Activated T-helper 1 cell treated with anti-CD3 and anti-CD28 coated beads, Interleukin-12 subunit alpha, Interleukin-12 subunit beta, Interleukin-2, Interleukin-4 antibody, amounts not matched to agents 30 ng/mL and 10 ng/mL and 1 ng/mL, durations not matched to agents 14 hours and 24 hours and 36 hours (primary cell): ENCODE measurements at regions of chr7 and their contacts with region 1.

Region 1: DNA sequence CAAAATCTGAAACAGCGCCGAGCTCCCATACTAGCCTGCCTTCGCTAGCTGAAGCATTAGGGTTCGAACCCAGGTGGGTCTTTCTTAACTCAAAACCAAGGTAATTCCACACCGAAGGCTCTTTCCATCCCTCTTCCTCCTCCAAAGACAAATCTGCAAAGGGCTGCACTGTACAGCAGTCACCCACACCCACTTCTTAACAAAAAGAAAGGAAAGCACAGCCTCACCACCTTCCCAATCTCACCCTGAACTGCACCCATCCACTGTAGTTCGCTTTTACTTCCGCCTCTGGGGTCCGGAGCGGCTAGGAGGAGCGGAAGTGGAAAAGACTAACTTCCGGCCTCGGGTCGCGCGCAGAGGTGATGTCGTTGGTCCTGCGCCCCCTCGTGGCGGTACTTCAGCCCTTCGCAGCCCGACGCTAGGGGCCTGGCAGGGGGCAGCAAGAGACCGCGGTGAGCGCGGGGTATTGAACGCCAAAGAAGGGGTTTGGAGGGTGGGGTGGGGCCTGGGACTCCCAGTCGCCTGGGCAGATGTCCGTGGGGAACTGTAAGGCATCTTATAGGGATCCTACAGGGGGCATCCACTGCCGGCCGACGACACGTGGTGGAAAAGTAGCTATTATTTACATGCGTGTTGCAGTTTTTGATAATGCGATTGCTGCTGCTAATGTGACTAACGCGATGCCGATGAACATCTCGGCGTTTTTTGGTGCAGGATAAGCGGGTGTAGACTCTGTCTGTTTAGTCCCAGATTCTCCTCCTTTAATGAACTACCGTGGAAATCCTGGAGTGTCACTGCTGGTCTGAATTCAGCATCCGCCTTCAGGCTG is at the start of gene MTERF1:
- DNase-seq: peak; percentile 85
- H3K4me3 Mint-ChIP-seq: peak within 1 kb of the TSS; percentile 99
- H3K27ac Mint-ChIP-seq: peak within 1 kb of the TSS; percentile 98
- H3K4me1 Mint-ChIP-seq: peaks cover 37% of the 10 kb centered on the region
- H3K27me3 Mint-ChIP-seq: peaks cover 2% of the 10 kb centered on the region
- total RNA-seq, gene MTERF1: 19.3 and 20.4 TPM in 2 replicates

Region 2: DNA sequence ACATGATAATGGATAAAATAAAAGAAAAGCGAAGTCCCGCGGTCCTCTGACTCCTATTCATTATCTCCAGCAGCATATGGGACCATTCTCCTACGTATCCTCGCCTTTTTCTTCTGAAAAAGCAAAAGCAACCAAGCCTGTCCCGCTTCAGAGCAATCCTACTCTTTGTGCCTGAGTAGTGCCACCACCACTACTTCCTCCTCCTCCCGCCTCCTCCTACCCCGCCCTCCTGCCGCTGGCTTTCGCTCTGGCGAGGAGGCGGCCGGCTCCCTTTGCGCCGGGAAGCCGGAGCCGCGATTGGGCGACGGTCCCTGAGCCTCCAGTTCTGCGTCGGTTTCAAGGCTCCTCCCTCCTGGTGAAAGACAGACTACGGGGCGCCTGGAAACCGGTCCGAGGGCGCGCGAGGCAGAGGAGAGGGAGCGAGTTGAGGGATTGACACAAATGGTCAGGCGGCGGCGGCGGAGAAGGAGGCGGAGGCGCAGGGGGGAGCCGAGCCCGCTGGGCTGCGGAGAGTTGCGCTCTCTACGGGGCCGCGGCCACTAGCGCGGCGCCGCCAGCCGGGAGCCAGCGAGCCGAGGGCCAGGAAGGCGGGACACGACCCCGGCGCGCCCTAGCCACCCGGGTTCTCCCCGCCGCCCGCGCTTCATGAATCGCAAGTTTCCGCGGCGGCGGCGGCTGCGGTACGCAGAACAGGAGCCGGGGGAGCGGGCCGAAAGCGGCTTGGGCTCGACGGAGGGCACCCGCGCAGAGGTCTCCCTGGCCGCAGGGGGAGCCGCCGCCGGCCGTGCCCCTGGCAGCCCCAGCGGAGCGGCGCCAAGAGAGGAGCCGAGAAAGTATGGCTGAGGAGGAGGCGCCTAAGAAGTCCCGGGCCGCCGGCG is 616.3 kb before region 1 on chr7 and contains the start of gene FZD1:
- intact Hi-C with region 1: loop called (anchors 1 kb)
- DNase-seq: peak; percentile 66
- H3K4me3 Mint-ChIP-seq: peak within 1 kb of the TSS; percentile 88
- H3K27ac Mint-ChIP-seq: peak within 1 kb of the TSS; percentile 74
- H3K4me1 Mint-ChIP-seq: no peaks in the 10 kb centered on the region
- H3K27me3 Mint-ChIP-seq: peaks cover 47% of the 10 kb centered on the region
- total RNA-seq, gene FZD1: 0.70 and 0.86 TPM in 2 replicates

Region 3: DNA sequence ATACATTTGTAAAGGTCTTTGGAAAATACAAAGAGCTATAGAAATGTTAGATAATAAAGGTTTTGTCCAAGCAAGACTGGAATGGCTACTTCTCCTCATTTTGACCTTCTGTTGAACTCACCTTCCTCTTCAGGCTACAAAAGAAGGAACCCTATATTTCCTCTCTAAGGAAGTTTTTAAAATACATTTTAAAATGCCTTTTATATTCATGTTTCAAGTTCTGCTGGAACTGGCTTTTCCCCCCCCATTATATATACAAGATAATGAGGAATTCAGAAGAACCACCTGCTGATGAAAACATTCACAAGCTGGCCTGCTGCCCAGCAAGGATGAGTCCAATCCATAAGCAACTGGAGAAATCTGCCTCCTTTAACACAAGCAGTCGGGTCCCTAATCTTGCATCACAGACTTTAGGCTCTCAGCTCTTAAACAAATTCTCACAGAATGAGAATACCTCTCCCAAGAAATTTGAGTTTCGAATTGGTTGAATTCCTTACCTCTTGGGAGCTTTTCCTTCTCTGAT is 44.7 kb before region 1 on chr7:
- intact Hi-C with region 1: loop called (anchors 2 kb)
- DNase-seq: no peak
- H3K4me3 Mint-ChIP-seq: no peak overlapping the region
- H3K27ac Mint-ChIP-seq: no peak overlapping the region
- H3K4me1 Mint-ChIP-seq: no peaks in the 10 kb centered on the region
- H3K27me3 Mint-ChIP-seq: peaks cover 2% of the 10 kb centered on the region

Region 4: GRCh38 chr7:91918356-91918755 is 37.7 kb after region 1 on chr7:
- intact Hi-C with region 1: no loop called
- DNase-seq: no peak
- H3K4me3 Mint-ChIP-seq: no peak overlapping the region
- H3K27ac Mint-ChIP-seq: no peak overlapping the region
- H3K4me1 Mint-ChIP-seq: peaks cover 11% of the 10 kb centered on the region
- H3K27me3 Mint-ChIP-seq: peaks cover 1% of the 10 kb centered on the region

Region 5: GRCh38 chr7:91953618-91954017 is 73.0 kb after region 1 on chr7:
- intact Hi-C with region 1: loop called (anchors 1 kb)
- DNase-seq: no peak
- H3K4me3 Mint-ChIP-seq: no peak overlapping the region
- H3K27ac Mint-ChIP-seq: no peak overlapping the region
- H3K4me1 Mint-ChIP-seq: peaks cover 9% of the 10 kb centered on the region
- H3K27me3 Mint-ChIP-seq: no peaks in the 10 kb centered on the region